Left ventricle myocardium inferior (tissue), 1 donor: ENCODE measurements at regions of chr1 and their contacts with region 1.

Region 1: GRCh38 chr1:232629250-232630046 is 485 bp downstream of the SIPA1L2 start:
- DNase-seq: peak; percentile 35
- H3K4me3 ChIP-seq: peak overlapping the region; percentile 91
- H3K27ac ChIP-seq: peak overlapping the region; percentile 95
- H3K4me1 ChIP-seq: peaks cover 60% of the 10 kb centered on the region
- H3K27me3 ChIP-seq: no peaks in the 10 kb centered on the region
- CTCF ChIP-seq: no peak

Region 2: DNA sequence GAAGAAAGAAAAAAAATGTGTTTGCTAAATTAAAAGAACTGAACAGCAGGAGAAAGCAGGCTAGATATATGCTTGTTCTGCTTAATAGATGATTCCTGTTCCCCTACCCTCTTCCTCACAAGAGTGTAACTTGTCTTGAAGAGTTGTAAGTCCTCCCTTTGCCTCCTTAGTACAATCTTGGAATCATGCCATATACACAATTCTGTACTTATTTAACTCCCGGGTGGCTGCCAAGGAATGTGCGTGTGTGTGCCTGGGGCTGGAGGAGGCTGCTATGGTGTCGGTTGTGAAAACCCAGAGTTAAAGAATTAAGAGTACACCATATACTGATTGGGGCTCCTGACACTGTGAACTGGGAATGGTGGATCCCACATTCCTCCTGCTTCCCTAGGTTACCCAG is 193.7 kb before region 1 on chr1:
- intact Hi-C with region 1: loop called (anchors 10 kb)
- DNase-seq: no peak
- H3K4me3 ChIP-seq: no peak overlapping the region
- H3K27ac ChIP-seq: peak overlapping the region; percentile 16
- H3K4me1 ChIP-seq: peaks cover 79% of the 10 kb centered on the region
- H3K27me3 ChIP-seq: no peaks in the 10 kb centered on the region
- CTCF ChIP-seq: no peak

Region 3: GRCh38 chr1:232486454-232487207 is 142.8 kb before region 1 on chr1:
- intact Hi-C with region 1: loop called (anchors 10 kb)
- DNase-seq: no peak
- H3K4me3 ChIP-seq: no peak overlapping the region
- H3K27ac ChIP-seq: peak overlapping the region; percentile 76
- H3K4me1 ChIP-seq: peaks cover 40% of the 10 kb centered on the region
- H3K27me3 ChIP-seq: no peaks in the 10 kb centered on the region
- CTCF ChIP-seq: no peak

Region 4: DNA sequence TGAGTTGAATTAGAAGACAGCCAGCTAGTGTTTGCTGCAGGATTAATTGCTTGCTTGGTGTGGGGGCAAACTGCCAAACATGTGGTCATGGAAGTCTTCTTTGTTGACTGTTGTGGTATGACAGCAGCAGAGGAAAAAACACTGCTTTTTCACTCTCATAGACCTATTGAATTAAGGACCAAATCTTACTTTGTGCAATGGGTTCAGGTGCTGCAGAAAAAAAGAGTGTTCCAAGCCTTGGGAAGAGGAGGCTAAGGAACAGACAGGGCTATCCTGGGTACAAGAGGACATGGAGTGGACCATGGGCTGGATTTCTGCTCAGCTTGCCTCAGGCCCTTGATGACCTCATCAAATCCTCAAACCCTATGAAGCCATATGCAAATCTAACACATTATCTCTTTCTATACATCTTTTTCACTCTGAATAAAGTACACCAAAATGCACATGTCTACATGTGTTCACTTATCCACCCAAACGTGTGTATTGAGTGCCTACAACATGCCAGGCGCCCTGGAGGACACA is 61.1 kb before region 1 on chr1:
- intact Hi-C with region 1: loop called (anchors 10 kb)
- DNase-seq: no peak
- H3K4me3 ChIP-seq: no peak overlapping the region
- H3K27ac ChIP-seq: no peak overlapping the region
- H3K4me1 ChIP-seq: peaks cover 79% of the 10 kb centered on the region
- H3K27me3 ChIP-seq: no peaks in the 10 kb centered on the region
- CTCF ChIP-seq: no peak

Region 5: GRCh38 chr1:232578651-232579195 is 50.7 kb before region 1 on chr1:
- intact Hi-C with region 1: no loop called
- DNase-seq: no peak
- H3K4me3 ChIP-seq: no peak overlapping the region
- H3K27ac ChIP-seq: peak overlapping the region; percentile 79
- H3K4me1 ChIP-seq: peaks cover 77% of the 10 kb centered on the region
- H3K27me3 ChIP-seq: no peaks in the 10 kb centered on the region
- CTCF ChIP-seq: no peak

Region 6: GRCh38 chr1:232589812-232590743 is 39.4 kb before region 1 on chr1:
- intact Hi-C with region 1: no loop called
- DNase-seq: no peak
- H3K4me3 ChIP-seq: peak overlapping the region; percentile 18
- H3K27ac ChIP-seq: peak overlapping the region; percentile 75
- H3K4me1 ChIP-seq: peaks cover 91% of the 10 kb centered on the region
- H3K27me3 ChIP-seq: no peaks in the 10 kb centered on the region
- CTCF ChIP-seq: no peak